ENCODE measurements at regions of chr2 and their contacts with region 1.

Region 1: GRCh38 chr2:147082850-147083522 is 761.8 kb upstream of the ACVR2A start:
- DNase-seq: peak; percentile 52
- ATAC-seq: peak; percentile 51
- H3K4me3 Mint-ChIP-seq: no peak overlapping the region
- H3K27ac Mint-ChIP-seq: no peak overlapping the region
- H3K4me1 Mint-ChIP-seq: no peaks in the 10 kb centered on the region
- H3K27me3 Mint-ChIP-seq: peaks cover 3% of the 10 kb centered on the region
- CTCF ChIP-seq: peak; percentile 83

Region 2: DNA sequence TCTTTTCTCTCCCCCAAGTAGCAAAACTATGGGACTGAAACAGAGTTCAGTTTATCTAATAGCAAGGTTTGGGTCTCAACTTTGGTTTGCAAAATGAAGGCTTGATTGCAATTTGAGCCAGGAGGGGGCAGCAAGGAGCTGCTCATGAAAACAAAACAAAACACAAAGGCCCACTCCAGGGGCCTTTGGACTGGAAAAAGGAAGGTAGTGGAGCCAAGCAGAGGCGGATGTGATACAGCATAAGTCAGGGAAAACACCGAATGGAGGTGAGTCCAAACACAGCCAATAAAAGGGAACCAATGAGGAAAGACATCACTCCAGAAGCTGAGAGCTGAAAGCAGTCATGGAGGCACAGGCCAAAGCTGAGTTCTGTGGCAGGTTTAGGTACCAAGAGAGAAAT is 37.9 kb before region 1 on chr2:
- CTCF ChIA-PET with region 1: interaction called, 10 read pairs
- POLR2A ChIA-PET with region 1: no interaction called
- intact Hi-C with region 1: no loop called
- DNase-seq: peak; percentile 50
- ATAC-seq: no peak
- H3K4me3 Mint-ChIP-seq: no peak overlapping the region
- H3K27ac Mint-ChIP-seq: no peak overlapping the region
- H3K4me1 Mint-ChIP-seq: no peaks in the 10 kb centered on the region
- H3K27me3 Mint-ChIP-seq: no peaks in the 10 kb centered on the region
- CTCF ChIP-seq: peak; percentile 61

Region 3: GRCh38 chr2:147094077-147094476 is 11.1 kb after region 1 on chr2:
- CTCF ChIA-PET with region 1: interaction called, 10 read pairs
- POLR2A ChIA-PET with region 1: no interaction called
- intact Hi-C with region 1: no loop called
- DNase-seq: no peak
- ATAC-seq: no peak
- H3K4me3 Mint-ChIP-seq: no peak overlapping the region
- H3K27ac Mint-ChIP-seq: no peak overlapping the region
- H3K4me1 Mint-ChIP-seq: no peaks in the 10 kb centered on the region
- H3K27me3 Mint-ChIP-seq: peaks cover 3% of the 10 kb centered on the region
- CTCF ChIP-seq: no peak

Region 4: DNA sequence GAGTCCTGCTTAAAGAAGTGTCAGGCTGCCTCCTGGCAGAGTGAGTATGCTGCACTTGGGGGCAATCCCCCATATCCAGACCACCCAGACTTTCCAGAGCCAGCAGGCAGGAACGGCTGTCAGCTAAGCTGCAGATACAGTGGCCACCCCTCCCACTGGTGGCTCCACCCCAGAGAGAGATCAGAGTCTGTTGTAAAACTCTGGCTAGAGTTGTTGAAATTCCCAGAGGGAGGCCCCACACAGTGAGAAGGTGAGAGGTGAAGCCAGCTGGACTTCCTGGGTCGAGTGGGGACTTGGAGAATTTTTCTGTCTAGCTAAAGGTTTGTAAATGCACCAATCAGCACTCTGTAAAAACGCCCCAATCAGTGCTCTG is 228.1 kb after region 1 on chr2:
- CTCF ChIA-PET with region 1: no interaction called
- POLR2A ChIA-PET with region 1: no interaction called
- intact Hi-C with region 1: no loop called
- DNase-seq: no peak
- ATAC-seq: no peak
- H3K4me3 Mint-ChIP-seq: no peak overlapping the region
- H3K27ac Mint-ChIP-seq: no peak overlapping the region
- H3K4me1 Mint-ChIP-seq: no peaks in the 10 kb centered on the region
- H3K27me3 Mint-ChIP-seq: no peaks in the 10 kb centered on the region
- CTCF ChIP-seq: no peak

Region 5: GRCh38 chr2:147910990-147911473 is 828.0 kb after region 1 on chr2:
- CTCF ChIA-PET with region 1: interaction called, 30 read pairs
- POLR2A ChIA-PET with region 1: no interaction called
- intact Hi-C with region 1: loop called (anchors 2 kb)
- DNase-seq: peak; percentile 30
- ATAC-seq: no peak
- H3K4me3 Mint-ChIP-seq: no peak overlapping the region
- H3K27ac Mint-ChIP-seq: no peak overlapping the region
- H3K4me1 Mint-ChIP-seq: no peaks in the 10 kb centered on the region
- H3K27me3 Mint-ChIP-seq: no peaks in the 10 kb centered on the region
- CTCF ChIP-seq: peak; percentile 88